BJ (cell line): ENCODE measurements at regions of chr17 and their contacts with region 1.

Region 1: GRCh38 chr17:49556223-49556971 is 19.3 kb upstream of the NXPH3 start:
- DNase-seq: no peak
- H3K4me3 ChIP-seq: no peak overlapping the region
- H3K27me3 ChIP-seq: 0 out of 2 replicates have a peak, but pooled peaks cover 1% of the 10 kb centered on the region
- CTCF ChIP-seq: peak; percentile 99

Region 2: GRCh38 chr17:49434821-49435670 is 121.4 kb before region 1 on chr17:
- CTCF ChIA-PET with region 1: interaction called, 294 read pairs
- POLR2A ChIA-PET with region 1: no interaction called
- DNase-seq: no peak
- H3K4me3 ChIP-seq: no peak overlapping the region
- H3K27me3 ChIP-seq: peaks cover 7% of the 10 kb centered on the region
- CTCF ChIP-seq: peak; percentile 85

Region 3: DNA sequence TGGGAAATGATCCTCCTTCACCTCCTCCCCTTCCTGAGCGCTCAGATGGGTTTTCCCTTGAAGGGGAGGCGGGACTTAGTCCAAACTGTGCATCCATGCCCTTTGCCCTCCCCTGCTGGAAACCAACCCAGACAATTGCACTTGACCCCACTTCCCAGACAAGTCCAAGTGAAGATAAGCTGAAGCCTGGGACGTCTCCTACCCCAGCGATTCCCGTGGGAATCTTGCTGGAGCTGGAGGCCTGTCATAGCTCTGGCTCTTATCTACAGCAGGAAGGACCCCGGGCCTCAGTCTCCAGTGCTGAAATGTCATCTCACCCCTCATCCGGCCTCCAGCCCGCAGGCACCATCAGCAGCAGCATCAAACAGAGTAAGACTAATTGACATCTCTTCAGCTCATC is 67.8 kb before region 1 on chr17:
- CTCF ChIA-PET with region 1: interaction called, 23 read pairs
- POLR2A ChIA-PET with region 1: no interaction called
- DNase-seq: no peak
- H3K4me3 ChIP-seq: no peak overlapping the region
- H3K27me3 ChIP-seq: peaks cover 39% of the 10 kb centered on the region
- CTCF ChIP-seq: no peak

Region 4: GRCh38 chr17:49515196-49515770 is 41.1 kb before region 1 on chr17:
- CTCF ChIA-PET with region 1: interaction called, 21 read pairs
- POLR2A ChIA-PET with region 1: no interaction called
- DNase-seq: peak; percentile 86
- H3K4me3 ChIP-seq: no peak overlapping the region
- H3K27me3 ChIP-seq: peaks cover 14% of the 10 kb centered on the region
- CTCF ChIP-seq: peak; percentile 40; the same call in 1 of the 2 replicates

Region 5: GRCh38 chr17:49575579-49576087 is 19.2 kb after region 1 on chr17 and contains the start of gene NXPH3:
- CTCF ChIA-PET with region 1: interaction called, 11 read pairs
- POLR2A ChIA-PET with region 1: no interaction called
- DNase-seq: no peak
- H3K4me3 ChIP-seq: peak within 1 kb of the TSS; percentile 72
- H3K27me3 ChIP-seq: peaks cover under 1% of the 10 kb centered on the region; the same call in 1 of the 2 replicates
- CTCF ChIP-seq: peak; percentile 24; the same call in 1 of the 2 replicates
- polyA plus RNA-seq, gene NXPH3: 5.0 and 9.3 TPM in 2 replicates

Region 6: GRCh38 chr17:49707608-49708514 is 151.5 kb after region 1 on chr17 and contains the start of gene SLC35B1:
- CTCF ChIA-PET with region 1: interaction called, 44 read pairs
- POLR2A ChIA-PET with region 1: no interaction called
- DNase-seq: peak; percentile 98
- H3K4me3 ChIP-seq: peak within 1 kb of the TSS; percentile 92
- H3K27me3 ChIP-seq: no peaks in the 10 kb centered on the region
- CTCF ChIP-seq: peak; percentile 95
- polyA plus RNA-seq, gene SLC35B1: 116 and 120 TPM in 2 replicates